Kidney (tissue), 22 donors: ENCODE measurements at regions of chr1 and their contacts with region 1.

Region 1: DNA sequence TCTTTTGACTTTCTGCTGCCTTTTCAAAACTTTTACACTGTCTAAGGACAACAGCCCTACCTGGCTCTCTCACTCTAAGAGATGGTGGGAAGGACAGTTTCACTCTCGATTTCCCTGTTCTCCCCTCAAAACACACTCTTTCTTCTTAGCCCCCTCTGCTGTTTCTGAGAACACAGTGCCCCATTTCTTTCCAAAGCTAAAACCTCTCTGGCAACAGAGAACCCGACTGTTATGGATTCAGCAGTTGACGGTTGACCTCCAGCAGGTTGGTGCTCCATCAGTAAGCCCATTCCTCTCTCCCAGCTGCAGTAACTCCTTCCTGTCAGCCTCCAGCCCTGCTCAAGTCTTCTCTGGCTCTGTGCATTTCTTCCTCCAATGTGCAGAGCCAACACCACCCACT is 88.2 kb upstream of the ABCD3 start:
- DNase-seq: peak in 1 of 5 donors; percentile 55
- H3K4me3 ChIP-seq: peak overlapping the region in 2 of 3 donors; percentile 14 to 19
- H3K27ac ChIP-seq: peak overlapping the region; percentile 18 to 49
- H3K4me1 ChIP-seq: peaks cover 12 to 18% (median 12%) of the 10 kb centered on the region in 3 donors
- H3K27me3 ChIP-seq: no peaks in the 10 kb centered on the region
- CTCF ChIP-seq: peak; percentile 50

Region 2: GRCh38 chr1:94061513-94062443 is 268.2 kb before region 1 on chr1:
- intact Hi-C with region 1: loop called (anchors 5 kb)
- DNase-seq: peak in 4 of 5 donors; percentile 70 to 86 (median 79)
- H3K4me3 ChIP-seq: peak overlapping the region in 1 of 3 donors; percentile 20
- H3K27ac ChIP-seq: peak overlapping the region in 1 of 2 donors; percentile 27
- H3K4me1 ChIP-seq: peaks cover 7 to 13% (median 10%) of the 10 kb centered on the region in 3 donors
- H3K27me3 ChIP-seq: no peaks in the 10 kb centered on the region
- CTCF ChIP-seq: peak; percentile 96

Region 3: DNA sequence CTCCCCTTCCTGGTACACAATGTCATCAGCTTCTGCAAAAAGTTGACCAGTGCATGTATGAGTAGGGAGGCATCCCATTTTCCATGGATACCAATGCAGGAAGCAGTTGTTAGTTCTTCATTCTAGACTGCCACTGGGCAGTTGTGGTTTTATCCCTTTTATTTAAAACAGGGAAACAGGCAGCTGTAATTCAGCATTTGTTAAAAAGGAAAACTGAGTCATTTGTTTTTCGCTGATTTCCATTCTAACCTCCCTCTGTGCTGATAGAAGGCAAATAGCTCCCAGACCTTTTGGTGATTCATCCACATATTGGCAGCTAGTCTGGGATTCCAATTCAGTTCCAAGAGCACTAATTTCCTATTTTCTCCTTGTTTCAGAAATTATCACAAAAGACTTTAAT is 188.0 kb before region 1 on chr1:
- intact Hi-C with region 1: no loop called
- DNase-seq: no peak
- H3K4me3 ChIP-seq: no peak overlapping the region
- H3K27ac ChIP-seq: no peak overlapping the region
- H3K4me1 ChIP-seq: no peaks in the 10 kb centered on the region
- H3K27me3 ChIP-seq: no peaks in the 10 kb centered on the region
- CTCF ChIP-seq: no peak

Region 4: GRCh38 chr1:94228640-94229375 is 101.2 kb before region 1 on chr1:
- intact Hi-C with region 1: no loop called
- DNase-seq: no peak
- H3K4me3 ChIP-seq: no peak overlapping the region
- H3K27ac ChIP-seq: no peak overlapping the region
- H3K4me1 ChIP-seq: peaks cover 0 to 16% (median 3%) of the 10 kb centered on the region in 3 donors
- H3K27me3 ChIP-seq: no peaks in the 10 kb centered on the region
- CTCF ChIP-seq: no peak

Region 5: DNA sequence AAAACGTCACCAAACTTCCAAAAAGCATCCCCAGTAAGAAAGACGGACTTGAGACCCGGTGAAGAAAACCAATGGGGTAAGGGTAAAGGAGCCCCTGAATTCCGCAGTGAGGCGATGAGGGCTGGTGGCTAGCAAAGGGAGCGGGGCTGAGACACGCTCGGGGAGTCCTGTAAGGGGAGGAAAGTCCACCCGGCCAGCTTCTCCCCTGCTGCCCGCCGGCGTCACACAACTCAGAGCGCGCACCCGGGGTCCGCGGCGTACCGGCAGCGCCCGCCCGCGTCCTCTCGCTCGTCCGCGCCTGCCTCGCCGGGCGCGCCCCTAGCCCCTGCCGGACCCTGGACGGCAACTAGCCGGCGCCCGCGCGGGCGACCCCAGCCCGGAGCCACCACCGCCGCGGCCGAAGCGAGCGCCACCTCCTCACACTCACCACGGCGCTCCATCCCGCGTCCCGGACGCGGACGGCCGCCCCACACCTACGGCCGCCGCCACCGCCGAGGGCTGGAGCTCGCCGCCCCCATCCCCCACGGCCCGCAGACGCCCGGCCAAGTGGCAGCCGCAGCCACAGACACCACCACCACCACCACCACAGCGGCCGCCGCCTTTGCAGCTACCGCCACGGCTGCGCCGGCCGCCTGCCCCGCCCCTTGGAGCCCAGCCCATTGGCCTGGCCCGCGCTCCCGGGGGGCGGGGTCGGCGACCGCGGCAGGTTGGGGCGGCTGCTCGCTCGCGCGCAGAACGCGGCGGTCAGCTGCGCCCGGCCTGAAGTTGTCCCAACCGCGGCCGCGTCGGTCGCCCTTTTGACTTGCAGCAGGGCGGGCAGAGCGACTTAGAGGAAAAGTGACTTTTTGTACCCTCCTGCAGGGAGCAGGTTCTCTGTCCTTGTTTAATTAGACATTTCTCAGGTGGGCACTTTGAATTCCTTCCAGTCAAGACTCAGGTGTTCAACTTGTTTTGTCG is 82.6 kb before region 1 on chr1:
- intact Hi-C with region 1: loop called (anchors 10 kb)
- DNase-seq: peak; percentile 79 to 94 (median 88)
- H3K4me3 ChIP-seq: peak overlapping the region; percentile 78 to 81 (median 79)
- H3K27ac ChIP-seq: peak overlapping the region; percentile 90 to 91
- H3K4me1 ChIP-seq: peaks cover 0 to 10% (median 0%) of the 10 kb centered on the region in 3 donors
- H3K27me3 ChIP-seq: peaks cover 4% of the 10 kb centered on the region
- CTCF ChIP-seq: no peak

Region 6: GRCh38 chr1:94463765-94464330 is 133.9 kb after region 1 on chr1:
- intact Hi-C with region 1: no loop called
- DNase-seq: peak in 1 of 5 donors; percentile 10
- H3K4me3 ChIP-seq: no peak overlapping the region
- H3K27ac ChIP-seq: no peak overlapping the region
- H3K4me1 ChIP-seq: peaks cover 0 to 7% (median 4%) of the 10 kb centered on the region in 3 donors
- H3K27me3 ChIP-seq: no peaks in the 10 kb centered on the region
- CTCF ChIP-seq: peak; percentile 60